H1 (cell line): ENCODE measurements at regions of chr3 and their contacts with region 1.

Region 1: DNA sequence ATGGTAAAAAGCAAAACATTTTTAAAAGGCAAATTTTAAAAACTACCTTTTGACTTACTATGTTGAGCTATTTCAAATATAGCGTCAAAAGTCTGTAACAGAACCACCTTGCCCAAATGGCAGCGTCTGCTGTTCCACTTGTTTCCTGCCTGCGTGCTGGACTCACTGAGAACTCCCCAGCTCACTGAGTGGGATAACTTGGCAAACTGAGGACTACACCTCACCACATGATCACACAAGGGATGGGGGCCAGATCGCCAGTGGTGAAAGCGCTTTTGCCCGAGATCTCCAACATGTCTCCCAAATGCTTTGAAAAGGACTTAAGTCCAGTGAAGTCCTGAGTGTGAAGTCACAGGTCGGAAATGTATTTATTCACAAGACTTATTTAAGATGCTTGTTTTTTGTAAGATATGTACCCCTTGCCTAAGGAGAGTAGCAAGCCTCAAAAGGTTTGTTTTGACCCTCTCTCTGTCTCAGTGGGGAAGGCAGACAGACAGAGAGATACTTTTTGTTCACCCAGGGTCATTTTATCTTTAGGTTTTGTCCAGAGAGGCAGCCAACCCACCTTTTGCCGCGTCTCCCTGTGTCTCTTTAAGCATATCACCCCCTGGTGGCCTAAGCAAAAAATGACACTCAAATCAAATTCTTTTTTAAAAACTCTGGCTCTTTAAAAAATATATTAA is 192.6 kb downstream of the PDZRN3 start:
- DNase-seq: no peak
- H3K4me3 ChIP-seq: no peak overlapping the region
- H3K27ac ChIP-seq: no peak overlapping the region
- H3K4me1 ChIP-seq: peaks cover under 1 to 10% (median 3%) of the 10 kb centered on the region in 4 experiments; a peak in 5 of 7 replicates
- H3K27me3 ChIP-seq: no peaks in the 10 kb centered on the region
- CTCF ChIP-seq: peak; percentile 34 to 63 (median 54)
- EP300 ChIP-seq: no peak
- POLR2A ChIP-seq: no peak
- RAD21 ChIP-seq: peak; percentile 59 to 66

Region 2: GRCh38 chr3:73100741-73101559 is 331.2 kb before region 1 on chr3:
- CTCF ChIA-PET with region 1: interaction called, 18 read pairs
- POLR2A ChIA-PET with region 1: no interaction called
- DNase-seq: peak; percentile 74 to 94
- H3K4me3 ChIP-seq: no peak overlapping the region
- H3K27ac ChIP-seq: no peak overlapping the region
- H3K4me1 ChIP-seq: peaks cover 0 to 4% (median 1%) of the 10 kb centered on the region in 4 experiments; a peak in 3 of 7 replicates
- H3K27me3 ChIP-seq: no peaks in the 10 kb centered on the region
- CTCF ChIP-seq: peak; percentile 88 to 98 (median 90)
- EP300 ChIP-seq: no peak
- POLR2A ChIP-seq: no peak
- RAD21 ChIP-seq: peak; percentile 96 to 97

Region 3: DNA sequence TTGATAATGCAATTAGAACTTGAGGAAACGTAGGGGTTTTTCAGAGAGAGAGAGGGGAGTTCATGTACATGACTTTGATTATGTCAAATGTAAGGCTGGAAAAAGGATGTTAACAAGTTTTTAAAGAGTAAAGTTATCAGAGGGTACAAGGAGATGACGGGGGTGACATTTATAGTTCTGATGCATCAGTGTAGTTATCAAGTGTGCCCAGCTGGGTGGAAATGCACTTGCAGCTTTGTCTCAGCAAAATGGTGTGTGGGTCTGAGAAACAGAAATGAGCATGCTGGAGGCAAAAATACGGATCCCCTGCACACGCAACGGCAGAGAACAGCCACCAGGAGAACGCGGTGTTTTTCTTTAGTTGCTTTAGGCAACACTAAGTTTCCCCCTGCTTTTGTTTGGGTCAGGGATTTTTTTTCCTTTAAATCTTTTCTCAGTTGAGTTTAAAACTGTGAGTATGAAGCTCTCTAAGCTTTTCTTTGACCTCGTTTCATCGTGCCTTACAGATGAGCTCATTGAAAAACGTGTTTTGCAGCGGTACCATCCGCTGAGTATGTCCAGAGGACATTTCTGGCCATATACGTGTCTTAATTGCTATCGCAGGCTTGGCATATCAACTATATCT is 12.9 kb before region 1 on chr3:
- CTCF ChIA-PET with region 1: interaction called, 14 read pairs
- POLR2A ChIA-PET with region 1: no interaction called
- DNase-seq: no peak
- H3K4me3 ChIP-seq: no peak overlapping the region
- H3K27ac ChIP-seq: no peak overlapping the region
- H3K4me1 ChIP-seq: no peaks in the 10 kb centered on the region; a peak in 2 of 7 replicates
- H3K27me3 ChIP-seq: no peaks in the 10 kb centered on the region
- CTCF ChIP-seq: peak; percentile 29 to 70 (median 69); a peak in 3 of 4 replicates
- EP300 ChIP-seq: no peak
- POLR2A ChIP-seq: no peak
- RAD21 ChIP-seq: peak; percentile 29 to 38; a peak in 3 of 4 replicates

Region 4: GRCh38 chr3:73442886-73443285 is 10.7 kb after region 1 on chr3:
- CTCF ChIA-PET with region 1: interaction called, 10 read pairs
- POLR2A ChIA-PET with region 1: no interaction called
- DNase-seq: no peak
- H3K4me3 ChIP-seq: no peak overlapping the region
- H3K27ac ChIP-seq: no peak overlapping the region
- H3K4me1 ChIP-seq: peaks cover 0 to 2% (median 0%) of the 10 kb centered on the region in 4 experiments; a peak in 1 of 7 replicates
- H3K27me3 ChIP-seq: no peaks in the 10 kb centered on the region
- CTCF ChIP-seq: no peak
- EP300 ChIP-seq: no peak
- POLR2A ChIP-seq: no peak
- RAD21 ChIP-seq: no peak

Region 5: DNA sequence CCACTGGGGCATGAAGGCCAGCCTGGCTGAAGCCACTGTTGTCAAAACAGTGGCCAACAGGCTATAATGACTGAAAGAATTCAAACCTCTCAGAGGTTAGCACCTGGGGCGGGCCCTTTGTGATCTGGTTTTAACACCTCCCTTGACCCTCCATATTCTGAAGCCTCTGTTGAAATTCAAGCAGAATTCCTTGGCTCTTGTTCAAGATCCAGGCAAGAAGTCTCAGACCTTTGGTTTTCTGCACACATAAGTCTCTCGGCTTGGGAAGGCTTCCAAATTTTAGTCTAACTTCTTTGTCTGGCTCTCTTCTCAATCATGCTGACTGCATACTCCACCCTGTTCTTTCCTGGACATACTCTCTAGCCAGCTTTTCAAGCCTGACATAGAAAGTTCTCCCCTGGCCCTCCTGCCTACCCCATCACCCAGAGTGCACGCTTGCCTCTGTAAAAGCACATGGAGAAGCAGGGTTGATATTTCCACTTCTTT is 48.1 kb after region 1 on chr3:
- CTCF ChIA-PET with region 1: no interaction called
- POLR2A ChIA-PET with region 1: no interaction called
- DNase-seq: no peak
- H3K4me3 ChIP-seq: no peak overlapping the region
- H3K27ac ChIP-seq: no peak overlapping the region
- H3K4me1 ChIP-seq: peaks cover 9 to 16% (median 14%) of the 10 kb centered on the region in 4 experiments
- H3K27me3 ChIP-seq: peaks cover 0 to 1% (median 0%) of the 10 kb centered on the region in 4 experiments; a peak in 1 of 7 replicates
- CTCF ChIP-seq: no peak
- EP300 ChIP-seq: no peak
- POLR2A ChIP-seq: no peak
- RAD21 ChIP-seq: no peak